ENCODE measurements at regions of chr15 and their contacts with region 1.

Region 1: DNA sequence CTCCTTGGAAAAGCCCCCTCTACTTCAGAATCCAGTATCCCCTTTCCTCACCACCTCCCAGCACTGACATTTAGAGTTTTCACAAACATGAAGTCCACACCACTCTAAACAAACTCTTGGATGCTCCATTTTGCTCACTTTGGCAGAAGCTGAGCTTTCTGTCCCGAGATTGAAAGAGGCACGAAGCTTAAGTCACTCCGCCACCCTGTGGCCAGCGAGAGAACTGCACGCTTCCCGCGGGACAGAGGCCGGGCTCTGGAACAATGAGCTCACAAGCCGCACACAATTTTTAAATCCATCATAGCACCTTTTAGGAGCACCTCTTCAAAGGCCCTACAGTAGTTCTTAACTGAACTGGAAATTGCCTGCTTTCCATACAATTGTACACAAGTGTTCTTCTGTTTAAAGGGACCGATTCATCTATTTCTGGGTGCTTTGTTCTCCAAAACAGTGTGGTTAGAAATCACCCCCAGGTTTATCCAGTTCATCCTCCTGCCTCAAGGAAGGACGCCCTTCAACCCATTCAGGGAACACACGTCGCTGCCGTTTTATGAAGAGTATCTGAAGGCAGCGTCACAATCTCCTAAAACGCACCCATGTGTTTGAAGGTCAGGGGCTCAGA is 226.1 kb downstream of the VPS13C start:
- DNase-seq: peak; percentile 87
- ATAC-seq: peak; percentile 48
- H3K4me3 Mint-ChIP-seq: no peak overlapping the region
- H3K27ac Mint-ChIP-seq: no peak overlapping the region
- H3K4me1 Mint-ChIP-seq: peaks cover 20% of the 10 kb centered on the region
- H3K27me3 Mint-ChIP-seq: no peaks in the 10 kb centered on the region
- CTCF ChIP-seq: peak; percentile 95

Region 2: GRCh38 chr15:61118885-61119284 is 715.3 kb before region 1 on chr15:
- CTCF ChIA-PET with region 1: interaction called, 12 read pairs
- POLR2A ChIA-PET with region 1: no interaction called
- DNase-seq: peak; percentile 35
- ATAC-seq: peak; percentile 90
- H3K4me3 Mint-ChIP-seq: no peak overlapping the region
- H3K27ac Mint-ChIP-seq: no peak overlapping the region
- H3K4me1 Mint-ChIP-seq: peaks cover 39% of the 10 kb centered on the region
- H3K27me3 Mint-ChIP-seq: no peaks in the 10 kb centered on the region
- CTCF ChIP-seq: peak; percentile 30; the same call in 1 of the 2 replicates

Region 3: GRCh38 chr15:61195116-61196002 is 638.8 kb before region 1 on chr15:
- CTCF ChIA-PET with region 1: interaction called, 19 read pairs
- POLR2A ChIA-PET with region 1: no interaction called
- DNase-seq: no peak
- ATAC-seq: peak; percentile 71
- H3K4me3 Mint-ChIP-seq: no peak overlapping the region
- H3K27ac Mint-ChIP-seq: no peak overlapping the region
- H3K4me1 Mint-ChIP-seq: peaks cover 42% of the 10 kb centered on the region
- H3K27me3 Mint-ChIP-seq: no peaks in the 10 kb centered on the region
- CTCF ChIP-seq: peak; percentile 82

Region 4: GRCh38 chr15:61537337-61537736 is 296.9 kb before region 1 on chr15:
- CTCF ChIA-PET with region 1: interaction called, 39 read pairs
- POLR2A ChIA-PET with region 1: interaction called, 4 read pairs
- DNase-seq: no peak
- ATAC-seq: no peak
- H3K4me3 Mint-ChIP-seq: no peak overlapping the region
- H3K27ac Mint-ChIP-seq: no peak overlapping the region
- H3K4me1 Mint-ChIP-seq: no peaks in the 10 kb centered on the region
- H3K27me3 Mint-ChIP-seq: no peaks in the 10 kb centered on the region
- CTCF ChIP-seq: no peak

Region 5: GRCh38 chr15:61644550-61644949 is 189.6 kb before region 1 on chr15:
- CTCF ChIA-PET with region 1: interaction called, 32 read pairs
- POLR2A ChIA-PET with region 1: interaction called, 3 read pairs
- DNase-seq: peak; percentile 21
- ATAC-seq: peak; percentile 76
- H3K4me3 Mint-ChIP-seq: no peak overlapping the region
- H3K27ac Mint-ChIP-seq: no peak overlapping the region
- H3K4me1 Mint-ChIP-seq: peaks cover 26% of the 10 kb centered on the region
- H3K27me3 Mint-ChIP-seq: peaks cover 42% of the 10 kb centered on the region
- CTCF ChIP-seq: no peak

Region 6: DNA sequence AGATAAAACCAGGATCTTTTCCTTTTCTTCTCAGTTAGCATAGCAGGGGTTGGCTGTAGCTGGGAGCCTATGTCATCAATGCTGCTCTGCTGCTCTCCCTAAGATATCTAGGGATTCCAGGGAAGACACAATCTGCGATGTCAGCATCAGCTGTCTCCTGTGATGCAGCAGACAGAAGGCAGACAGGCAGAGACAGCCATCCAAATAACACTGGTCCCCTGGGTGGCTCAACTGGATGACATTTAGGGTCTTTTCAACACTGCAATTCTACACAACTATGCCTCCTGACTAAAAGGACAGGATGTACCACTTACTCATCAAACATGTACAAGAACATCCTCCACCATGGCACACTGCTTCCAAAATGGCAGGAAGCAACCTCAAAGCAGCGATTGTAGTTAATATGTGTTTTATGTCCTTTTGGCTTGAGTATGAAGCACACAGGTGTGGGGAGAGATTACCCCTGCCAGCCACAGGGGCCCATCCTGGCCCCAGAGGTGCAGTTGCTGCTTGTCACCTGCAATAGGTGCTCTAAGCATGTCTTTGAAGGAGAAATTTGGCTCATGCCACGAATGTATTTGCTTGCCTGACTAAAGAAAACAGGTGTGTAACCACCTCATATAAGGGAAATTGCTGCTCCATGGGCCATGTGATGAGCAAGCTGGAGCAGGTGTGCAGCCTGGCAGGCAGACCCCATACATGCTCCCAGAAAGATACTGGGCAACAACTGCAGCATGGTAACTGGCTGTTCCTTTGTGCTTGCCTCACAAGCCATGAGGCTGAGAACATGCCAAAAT is 131.8 kb before region 1 on chr15:
- CTCF ChIA-PET with region 1: interaction called, 25 read pairs
- POLR2A ChIA-PET with region 1: no interaction called
- DNase-seq: peak; percentile 41
- ATAC-seq: peak; percentile 92
- H3K4me3 Mint-ChIP-seq: no peak overlapping the region
- H3K27ac Mint-ChIP-seq: no peak overlapping the region
- H3K4me1 Mint-ChIP-seq: peaks cover 12% of the 10 kb centered on the region
- H3K27me3 Mint-ChIP-seq: no peaks in the 10 kb centered on the region
- CTCF ChIP-seq: 0 out of 2 replicates have a peak, but pooled peaks have one; percentile 20

Region 7: GRCh38 chr15:61906961-61907752 is 73.0 kb after region 1 on chr15:
- CTCF ChIA-PET with region 1: no interaction called
- POLR2A ChIA-PET with region 1: no interaction called
- DNase-seq: no peak
- ATAC-seq: no peak
- H3K4me3 Mint-ChIP-seq: no peak overlapping the region
- H3K27ac Mint-ChIP-seq: no peak overlapping the region
- H3K4me1 Mint-ChIP-seq: no peaks in the 10 kb centered on the region
- H3K27me3 Mint-ChIP-seq: no peaks in the 10 kb centered on the region
- CTCF ChIP-seq: no peak

Region 8: DNA sequence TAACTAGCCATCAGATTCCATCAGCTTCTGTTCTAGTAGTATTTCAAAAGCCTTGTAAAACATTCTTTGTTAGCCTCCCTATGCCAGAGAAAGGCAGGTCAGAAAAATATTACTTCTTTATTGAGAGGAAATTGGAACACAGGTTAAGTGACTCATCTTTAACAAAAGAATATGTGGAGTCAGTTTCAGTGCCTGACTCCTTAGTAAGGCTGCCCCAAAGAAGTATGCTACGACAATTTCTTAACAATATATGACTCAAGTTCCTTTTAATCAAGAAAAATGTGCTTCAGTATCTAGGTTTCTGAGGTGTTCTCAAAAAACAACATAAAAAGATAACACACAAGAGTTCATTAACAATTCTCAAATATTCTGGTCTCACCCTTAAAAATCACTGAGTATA is 86.9 kb after region 1 on chr15:
- CTCF ChIA-PET with region 1: no interaction called
- POLR2A ChIA-PET with region 1: no interaction called
- DNase-seq: no peak
- ATAC-seq: no peak
- H3K4me3 Mint-ChIP-seq: no peak overlapping the region
- H3K27ac Mint-ChIP-seq: no peak overlapping the region
- H3K4me1 Mint-ChIP-seq: no peaks in the 10 kb centered on the region
- H3K27me3 Mint-ChIP-seq: no peaks in the 10 kb centered on the region
- CTCF ChIP-seq: no peak